GM12878 (cell line): ENCODE measurements at regions of chr13 and their contacts with region 1.

Region 1: DNA sequence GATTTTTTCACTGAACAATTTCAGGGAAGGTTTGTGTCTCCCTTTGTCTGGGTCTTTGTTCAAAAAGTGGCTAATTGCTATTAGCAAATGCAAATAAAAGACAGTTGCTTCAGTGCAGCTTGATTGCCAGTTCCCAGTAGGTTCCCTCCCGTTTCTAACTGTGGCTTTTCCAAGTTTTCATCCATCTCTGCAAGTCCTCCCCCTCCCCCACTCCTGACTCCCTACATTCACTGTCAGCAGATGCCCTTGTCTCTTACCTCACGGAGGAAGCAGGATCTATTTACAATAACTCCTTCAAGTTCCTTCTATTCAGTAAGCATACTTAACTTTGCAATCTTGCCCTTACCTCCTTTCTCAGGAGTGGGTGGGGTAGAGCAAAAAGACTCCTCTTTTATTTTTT is 55.4 kb upstream of the SCEL start:
- DNase-seq: no peak
- ATAC-seq: no peak
- H3K4me3 ChIP-seq: no peak overlapping the region
- H3K27ac ChIP-seq: no peak overlapping the region
- H3K4me1 ChIP-seq: peaks cover 6% of the 10 kb centered on the region
- H3K27me3 ChIP-seq: no peaks in the 10 kb centered on the region
- CTCF ChIP-seq: no peak
- EP300 ChIP-seq: no peak
- POLR2A ChIP-seq: no peak
- RAD21 ChIP-seq: no peak

Region 2: DNA sequence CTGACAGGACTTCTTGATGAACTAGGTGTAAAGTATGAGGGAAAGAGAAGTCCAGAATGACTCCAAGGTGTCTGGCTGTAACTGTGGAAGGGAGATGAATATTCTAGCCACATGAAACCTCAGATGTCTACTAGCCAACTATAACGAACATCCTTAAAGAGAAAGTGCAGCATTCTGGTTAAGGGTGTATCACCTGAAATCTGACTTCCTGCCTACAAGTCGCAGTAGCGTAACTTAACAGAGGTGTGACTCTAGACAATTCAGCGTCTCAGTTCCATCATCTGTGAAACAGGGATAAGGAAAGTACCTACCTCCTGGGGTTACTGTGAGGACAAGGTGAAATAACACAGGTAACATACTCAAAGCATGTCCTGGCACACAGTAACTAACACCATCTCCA is 307.4 kb before region 1 on chr13:
- CTCF ChIA-PET with region 1: interaction called, 5 read pairs
- POLR2A ChIA-PET with region 1: no interaction called
- RAD21 ChIA-PET with region 1: interaction called, 3 read pairs
- SMC1A ChIA-PET with region 1: interaction called, 11 read pairs
- in situ Hi-C with region 1: no loop called
- intact Hi-C with region 1: no loop called
- DNase-seq: no peak
- ATAC-seq: peak; percentile 20
- H3K4me3 ChIP-seq: no peak overlapping the region
- H3K27ac ChIP-seq: no peak overlapping the region
- H3K4me1 ChIP-seq: no peaks in the 10 kb centered on the region
- H3K27me3 ChIP-seq: no peaks in the 10 kb centered on the region
- CTCF ChIP-seq: no peak
- EP300 ChIP-seq: no peak
- POLR2A ChIP-seq: no peak
- RAD21 ChIP-seq: no peak

Region 3: GRCh38 chr13:77250975-77251374 is 229.1 kb before region 1 on chr13:
- CTCF ChIA-PET with region 1: interaction called, 8 read pairs
- POLR2A ChIA-PET with region 1: no interaction called
- RAD21 ChIA-PET with region 1: interaction called, 10 read pairs
- SMC1A ChIA-PET with region 1: interaction called, 5 read pairs
- in situ Hi-C with region 1: no loop called
- intact Hi-C with region 1: no loop called
- DNase-seq: no peak
- ATAC-seq: no peak
- H3K4me3 ChIP-seq: no peak overlapping the region
- H3K27ac ChIP-seq: no peak overlapping the region
- H3K4me1 ChIP-seq: no peaks in the 10 kb centered on the region
- H3K27me3 ChIP-seq: no peaks in the 10 kb centered on the region
- CTCF ChIP-seq: no peak
- EP300 ChIP-seq: no peak
- POLR2A ChIP-seq: no peak
- RAD21 ChIP-seq: no peak

Region 4: DNA sequence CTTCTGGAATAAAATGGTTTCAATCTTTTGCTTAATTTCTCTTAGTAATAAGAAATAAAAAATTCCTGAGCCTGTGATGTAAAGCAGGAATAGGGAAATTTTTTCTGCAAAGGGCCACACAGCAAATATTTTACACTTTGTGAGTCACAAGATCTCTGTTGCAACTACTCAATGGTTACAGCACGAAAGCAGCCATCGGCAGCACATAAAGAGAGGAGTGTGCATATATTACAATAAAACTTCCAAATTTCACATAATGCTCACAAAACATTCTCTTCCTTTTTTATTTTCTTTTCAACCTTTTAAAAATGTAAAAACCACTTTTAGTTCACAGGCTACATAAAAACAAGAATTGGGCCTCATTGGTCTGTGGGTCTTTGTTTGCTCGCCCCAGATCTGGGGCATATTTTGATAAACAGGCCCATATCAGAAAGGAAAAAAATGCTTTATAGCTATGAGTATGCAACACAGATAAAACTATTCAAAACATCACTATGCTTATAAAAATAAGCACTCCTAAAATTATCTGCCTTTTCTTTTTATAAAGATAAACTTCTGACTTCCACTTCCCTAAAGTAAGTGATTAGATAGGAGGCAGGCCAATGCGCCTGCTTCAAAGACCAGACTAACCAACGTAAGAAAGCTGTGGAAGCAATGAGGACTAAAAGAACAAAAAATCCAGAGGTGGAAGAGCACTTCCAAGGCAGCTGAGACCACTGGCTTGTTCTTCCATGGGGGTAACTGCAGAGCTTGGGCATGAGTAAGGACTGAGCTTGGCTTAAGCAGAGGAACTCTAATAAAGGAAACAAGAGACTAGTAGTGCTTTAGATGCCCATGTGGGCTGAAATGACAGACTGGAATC is 179.7 kb before region 1 on chr13:
- CTCF ChIA-PET with region 1: interaction called, 18 read pairs
- POLR2A ChIA-PET with region 1: interaction called, 4 read pairs
- RAD21 ChIA-PET with region 1: interaction called, 19 read pairs
- SMC1A ChIA-PET with region 1: interaction called, 28 read pairs
- in situ Hi-C with region 1: no loop called
- intact Hi-C with region 1: no loop called
- DNase-seq: no peak
- ATAC-seq: peak; percentile 52
- H3K4me3 ChIP-seq: peak overlapping the region; percentile 30; the same call in 1 of the 2 replicates
- H3K27ac ChIP-seq: peak overlapping the region; percentile 80
- H3K4me1 ChIP-seq: peaks cover 28% of the 10 kb centered on the region
- H3K27me3 ChIP-seq: no peaks in the 10 kb centered on the region
- CTCF ChIP-seq: no peak
- EP300 ChIP-seq: no peak
- POLR2A ChIP-seq: no peak
- RAD21 ChIP-seq: no peak

Region 5: DNA sequence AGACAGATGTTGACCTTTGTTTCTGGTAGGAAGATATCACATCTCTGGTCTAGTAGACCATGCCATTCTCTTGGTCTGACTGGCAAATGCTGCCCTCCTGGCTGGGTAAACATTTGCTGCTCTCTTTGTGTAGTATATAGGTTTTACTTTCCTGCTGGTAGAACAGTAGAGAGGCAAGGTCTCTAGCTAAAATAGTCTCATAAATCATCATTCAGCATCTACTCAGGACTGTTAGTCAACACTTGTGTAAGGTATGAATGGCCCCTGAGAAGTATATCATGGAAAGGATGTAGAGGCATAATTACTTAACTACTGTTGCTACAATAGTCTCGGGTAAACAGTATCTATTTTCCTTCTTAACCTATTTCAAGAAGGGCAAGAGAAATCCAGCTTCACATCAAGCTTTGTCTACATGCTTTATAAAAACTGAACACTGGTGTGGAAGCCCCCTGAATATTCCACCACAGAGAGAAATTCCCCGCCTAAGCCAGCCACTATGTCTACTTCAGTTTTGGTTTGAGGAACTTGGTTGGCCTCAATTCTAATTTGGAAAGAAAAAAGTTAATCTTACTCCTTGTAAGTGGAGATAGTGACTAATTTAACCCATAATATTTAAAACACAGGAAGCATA is 134.8 kb before region 1 on chr13:
- CTCF ChIA-PET with region 1: interaction called, 62 read pairs
- POLR2A ChIA-PET with region 1: interaction called, 6 read pairs
- RAD21 ChIA-PET with region 1: interaction called, 38 read pairs
- SMC1A ChIA-PET with region 1: interaction called, 39 read pairs
- in situ Hi-C with region 1: no loop called
- intact Hi-C with region 1: no loop called
- DNase-seq: no peak
- ATAC-seq: peak; percentile 81
- H3K4me3 ChIP-seq: no peak overlapping the region
- H3K27ac ChIP-seq: peak overlapping the region; percentile 49
- H3K4me1 ChIP-seq: peaks cover 13% of the 10 kb centered on the region
- H3K27me3 ChIP-seq: no peaks in the 10 kb centered on the region
- CTCF ChIP-seq: no peak
- EP300 ChIP-seq: peak; percentile 37 to 72; a peak in 1 of 4 replicates
- POLR2A ChIP-seq: no peak
- RAD21 ChIP-seq: peak; percentile 13; the same call in 1 of the 2 replicates

Region 6: DNA sequence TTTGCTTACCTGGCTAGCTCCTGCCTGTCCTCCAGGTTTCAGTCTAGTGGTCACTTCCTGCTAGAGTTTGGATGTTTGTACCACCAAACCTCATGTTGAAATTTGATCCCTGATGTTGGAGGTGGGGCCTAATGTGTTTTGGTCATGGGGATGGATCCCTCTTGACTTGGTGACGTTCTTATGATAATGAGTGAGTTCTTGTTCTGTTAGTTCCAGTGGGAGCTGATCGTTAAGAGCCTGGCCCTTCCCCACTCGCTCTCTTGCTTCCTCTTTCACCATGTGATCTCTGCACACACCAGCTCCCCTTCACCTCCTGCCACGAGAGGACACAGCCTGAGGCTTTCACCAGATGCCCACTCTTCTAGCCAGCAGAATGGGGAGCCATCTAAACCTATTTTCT is 31.4 kb before region 1 on chr13:
- CTCF ChIA-PET with region 1: interaction called, 10 read pairs
- POLR2A ChIA-PET with region 1: interaction called, 4 read pairs
- RAD21 ChIA-PET with region 1: interaction called, 6 read pairs
- SMC1A ChIA-PET with region 1: interaction called, 7 read pairs
- in situ Hi-C with region 1: no loop called
- intact Hi-C with region 1: no loop called
- DNase-seq: no peak
- ATAC-seq: peak; percentile 74
- H3K4me3 ChIP-seq: no peak overlapping the region
- H3K27ac ChIP-seq: no peak overlapping the region
- H3K4me1 ChIP-seq: no peaks in the 10 kb centered on the region; the same call in 1 of the 2 replicates
- H3K27me3 ChIP-seq: no peaks in the 10 kb centered on the region
- CTCF ChIP-seq: no peak
- EP300 ChIP-seq: no peak
- POLR2A ChIP-seq: no peak
- RAD21 ChIP-seq: no peak

Region 7: GRCh38 chr13:77565635-77566034 is 85.6 kb after region 1 on chr13:
- CTCF ChIA-PET with region 1: interaction called, 15 read pairs
- POLR2A ChIA-PET with region 1: no interaction called
- RAD21 ChIA-PET with region 1: interaction called, 22 read pairs
- SMC1A ChIA-PET with region 1: interaction called, 5 read pairs
- in situ Hi-C with region 1: no loop called
- intact Hi-C with region 1: no loop called
- DNase-seq: no peak
- ATAC-seq: peak; percentile 95
- H3K4me3 ChIP-seq: no peak overlapping the region
- H3K27ac ChIP-seq: no peak overlapping the region
- H3K4me1 ChIP-seq: no peaks in the 10 kb centered on the region
- H3K27me3 ChIP-seq: no peaks in the 10 kb centered on the region
- CTCF ChIP-seq: peak; percentile 44 to 76 (median 52); a peak in 5 of 6 replicates
- EP300 ChIP-seq: no peak
- POLR2A ChIP-seq: no peak
- RAD21 ChIP-seq: peak; percentile 95

Region 8: DNA sequence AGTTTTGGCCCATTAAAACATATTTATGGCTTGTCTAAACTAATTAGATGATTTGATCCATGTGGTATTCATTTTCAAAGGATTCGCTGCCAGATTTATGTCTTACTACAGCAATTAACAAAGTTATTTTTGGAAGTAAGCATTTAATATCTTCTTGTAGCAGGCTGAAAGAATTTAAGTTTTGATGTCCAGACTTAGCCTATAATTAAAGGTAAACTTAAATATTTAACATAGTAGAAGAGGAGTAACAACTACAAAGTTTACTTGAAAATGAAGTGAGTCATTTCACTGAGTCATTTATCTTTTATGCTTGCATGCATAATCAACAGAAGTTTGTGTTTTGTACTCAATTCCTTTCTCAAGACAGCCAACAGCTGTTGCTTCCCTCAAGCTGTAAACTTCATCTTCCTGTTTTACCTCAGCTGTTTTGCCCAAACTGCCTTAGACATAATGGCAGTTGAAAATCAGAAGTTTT is 380.5 kb after region 1 on chr13:
- CTCF ChIA-PET with region 1: no interaction called
- POLR2A ChIA-PET with region 1: no interaction called
- RAD21 ChIA-PET with region 1: no interaction called
- SMC1A ChIA-PET with region 1: no interaction called
- in situ Hi-C with region 1: no loop called
- intact Hi-C with region 1: no loop called
- DNase-seq: no peak
- ATAC-seq: no peak
- H3K4me3 ChIP-seq: no peak overlapping the region
- H3K27ac ChIP-seq: no peak overlapping the region
- H3K4me1 ChIP-seq: no peaks in the 10 kb centered on the region
- H3K27me3 ChIP-seq: no peaks in the 10 kb centered on the region
- CTCF ChIP-seq: no peak
- EP300 ChIP-seq: no peak
- POLR2A ChIP-seq: no peak
- RAD21 ChIP-seq: no peak